CD8-positive, alpha-beta memory T cell (primary cell): ENCODE measurements at regions of chr14 and their contacts with region 1.

Region 1: DNA sequence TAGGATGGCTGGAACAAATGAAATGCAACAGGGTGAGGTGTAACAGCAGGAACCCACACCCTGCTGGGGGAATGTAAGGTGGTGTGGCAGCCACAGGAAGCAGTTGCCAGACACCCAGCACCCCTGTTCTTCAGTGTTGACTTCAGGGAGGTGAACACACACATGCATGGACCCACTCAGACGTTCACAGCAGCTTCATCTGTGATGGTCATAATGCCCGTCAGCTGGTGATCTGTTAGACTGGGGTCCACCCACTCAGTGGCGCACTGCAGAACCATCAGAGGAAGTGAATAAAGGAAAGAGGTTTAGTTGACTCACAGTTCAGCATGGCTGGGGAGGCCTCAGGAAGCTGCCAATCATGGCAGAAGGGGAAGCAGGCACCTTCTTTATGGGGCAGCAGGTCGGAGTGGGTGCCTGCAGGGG is 22.7 kb upstream of the TEX22 start:
- DNase-seq: peak in 1 of 5 donors; percentile 9
- H3K4me3 ChIP-seq: no peak overlapping the region
- H3K4me3 Mint-ChIP-seq: peak overlapping the region in 3 of 7 donors; percentile 15 to 77 (median 39)
- H3K27ac ChIP-seq: no peak overlapping the region
- H3K27ac Mint-ChIP-seq: peak overlapping the region in 2 of 8 donors; percentile 38 to 86
- H3K4me1 ChIP-seq: peaks cover 19% of the 10 kb centered on the region
- H3K4me1 Mint-ChIP-seq: peaks cover 11 to 13% (median 13%) of the 10 kb centered on the region in 3 donors
- H3K27me3 ChIP-seq: no peaks in the 10 kb centered on the region
- H3K27me3 Mint-ChIP-seq: no peaks in the 10 kb centered on the region

Region 2: DNA sequence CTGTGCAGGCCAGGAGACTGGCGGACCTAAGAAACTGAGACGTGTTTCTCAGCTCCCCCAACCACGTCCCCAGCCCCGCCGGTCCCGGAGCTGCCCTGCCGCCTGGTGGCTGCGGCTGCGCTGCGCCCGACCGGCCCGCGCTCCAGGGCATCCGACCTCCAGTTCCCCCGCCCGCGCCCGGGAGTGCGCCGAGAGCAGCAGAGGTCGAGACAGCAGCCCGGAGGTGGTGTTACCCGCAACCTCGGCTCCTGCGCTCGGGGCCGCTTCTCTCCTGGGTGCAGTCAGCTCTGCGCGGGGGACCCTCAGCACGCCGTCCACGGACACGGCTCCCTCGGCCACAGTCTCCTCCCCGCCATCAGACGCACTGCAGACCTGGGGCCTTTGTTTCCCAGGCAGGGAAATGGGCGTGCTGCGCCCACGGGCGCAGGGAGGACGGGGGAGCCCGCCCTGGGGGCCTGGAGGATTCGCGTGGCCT is 288.8 kb before region 1 on chr14:
- CTCF ChIA-PET with region 1: no interaction called
- POLR2A ChIA-PET with region 1: no interaction called
- DNase-seq: peak; percentile 74 to 88 (median 85)
- H3K4me3 ChIP-seq: peak overlapping the region; percentile 67
- H3K4me3 Mint-ChIP-seq: peak overlapping the region; percentile 77 to 91 (median 80)
- H3K27ac ChIP-seq: peak overlapping the region; percentile 47
- H3K27ac Mint-ChIP-seq: peak overlapping the region in 7 of 8 donors; percentile 50 to 95 (median 83)
- H3K4me1 ChIP-seq: peaks cover 19% of the 10 kb centered on the region
- H3K4me1 Mint-ChIP-seq: peaks cover 5 to 26% (median 11%) of the 10 kb centered on the region in 3 donors
- H3K27me3 ChIP-seq: no peaks in the 10 kb centered on the region
- H3K27me3 Mint-ChIP-seq: no peaks in the 10 kb centered on the region

Region 3: GRCh38 chr14:105398044-105398725 is 22.5 kb after region 1 on chr14 and contains the start of gene TEX22:
- CTCF ChIA-PET with region 1: interaction called, 18 read pairs
- POLR2A ChIA-PET with region 1: no interaction called
- DNase-seq: peak; percentile 82 to 89 (median 85)
- H3K4me3 ChIP-seq: peak within 1 kb of the TSS; percentile 70
- H3K4me3 Mint-ChIP-seq: peak within 1 kb of the TSS; percentile 77 to 94 (median 84)
- H3K27ac ChIP-seq: peak within 1 kb of the TSS; percentile 78
- H3K27ac Mint-ChIP-seq: peak within 1 kb of the TSS; percentile 32 to 93 (median 82)
- H3K4me1 ChIP-seq: peaks cover 18% of the 10 kb centered on the region
- H3K4me1 Mint-ChIP-seq: peaks cover 5 to 23% (median 10%) of the 10 kb centered on the region in 3 donors
- H3K27me3 ChIP-seq: no peaks in the 10 kb centered on the region
- H3K27me3 Mint-ChIP-seq: no peaks in the 10 kb centered on the region
- total RNA-seq, gene TEX22: 1.4 to 2.9 TPM

Region 4: DNA sequence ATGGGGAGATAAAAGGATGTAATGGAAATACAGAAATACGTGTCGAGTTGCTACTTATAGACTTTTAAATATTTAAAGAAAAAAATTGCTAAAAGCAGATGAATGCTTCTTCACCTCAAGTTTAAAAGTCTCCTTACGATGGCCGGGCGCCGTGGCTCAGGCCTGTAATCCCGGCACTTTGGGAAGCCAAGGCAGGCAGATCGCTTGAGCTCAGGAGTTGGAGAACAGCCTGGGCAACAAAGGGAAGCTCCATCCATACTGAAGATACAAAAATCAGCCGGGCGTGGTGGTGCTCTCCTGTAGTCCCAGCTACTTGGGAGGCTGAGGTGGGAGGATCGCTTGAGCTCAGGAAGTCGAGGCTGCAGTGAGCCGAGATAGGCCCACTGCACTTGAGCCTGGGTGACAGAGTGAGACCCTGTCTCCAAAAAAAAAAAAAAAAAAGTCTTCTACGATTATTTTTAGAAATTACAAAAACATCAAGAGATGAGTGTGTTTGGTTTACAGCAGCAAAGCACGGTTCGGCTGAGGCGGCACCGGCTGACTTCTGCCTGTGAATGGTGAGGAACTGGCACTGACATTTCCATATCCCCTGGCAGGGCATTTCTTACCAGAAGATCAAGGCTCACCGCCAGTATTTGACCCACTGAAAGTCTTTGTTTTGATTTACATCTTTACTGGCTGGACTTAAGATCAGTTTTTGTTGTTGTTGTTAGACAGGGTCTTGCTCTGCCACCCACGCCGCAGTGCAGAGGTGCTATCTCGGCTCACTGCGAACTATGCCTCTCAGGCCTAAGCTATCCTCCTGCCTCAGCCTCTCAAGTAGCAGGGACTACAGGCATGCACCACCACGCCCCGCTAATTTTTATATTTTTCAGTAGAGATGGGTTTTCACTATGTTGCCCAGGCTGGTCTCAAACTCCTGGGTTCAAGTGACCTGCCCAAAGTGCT is 40.1 kb after region 1 on chr14:
- CTCF ChIA-PET with region 1: no interaction called
- POLR2A ChIA-PET with region 1: no interaction called
- DNase-seq: no peak
- H3K4me3 ChIP-seq: no peak overlapping the region
- H3K4me3 Mint-ChIP-seq: peak overlapping the region; percentile 58 to 76 (median 70)
- H3K27ac ChIP-seq: no peak overlapping the region
- H3K27ac Mint-ChIP-seq: peak overlapping the region in 1 of 8 donors; percentile 38
- H3K4me1 ChIP-seq: peaks cover 24% of the 10 kb centered on the region
- H3K4me1 Mint-ChIP-seq: peaks cover 4 to 31% (median 11%) of the 10 kb centered on the region in 3 donors
- H3K27me3 ChIP-seq: peaks cover 7% of the 10 kb centered on the region
- H3K27me3 Mint-ChIP-seq: peaks cover 25 to 37% of the 10 kb centered on the region in 2 donors

Region 5: DNA sequence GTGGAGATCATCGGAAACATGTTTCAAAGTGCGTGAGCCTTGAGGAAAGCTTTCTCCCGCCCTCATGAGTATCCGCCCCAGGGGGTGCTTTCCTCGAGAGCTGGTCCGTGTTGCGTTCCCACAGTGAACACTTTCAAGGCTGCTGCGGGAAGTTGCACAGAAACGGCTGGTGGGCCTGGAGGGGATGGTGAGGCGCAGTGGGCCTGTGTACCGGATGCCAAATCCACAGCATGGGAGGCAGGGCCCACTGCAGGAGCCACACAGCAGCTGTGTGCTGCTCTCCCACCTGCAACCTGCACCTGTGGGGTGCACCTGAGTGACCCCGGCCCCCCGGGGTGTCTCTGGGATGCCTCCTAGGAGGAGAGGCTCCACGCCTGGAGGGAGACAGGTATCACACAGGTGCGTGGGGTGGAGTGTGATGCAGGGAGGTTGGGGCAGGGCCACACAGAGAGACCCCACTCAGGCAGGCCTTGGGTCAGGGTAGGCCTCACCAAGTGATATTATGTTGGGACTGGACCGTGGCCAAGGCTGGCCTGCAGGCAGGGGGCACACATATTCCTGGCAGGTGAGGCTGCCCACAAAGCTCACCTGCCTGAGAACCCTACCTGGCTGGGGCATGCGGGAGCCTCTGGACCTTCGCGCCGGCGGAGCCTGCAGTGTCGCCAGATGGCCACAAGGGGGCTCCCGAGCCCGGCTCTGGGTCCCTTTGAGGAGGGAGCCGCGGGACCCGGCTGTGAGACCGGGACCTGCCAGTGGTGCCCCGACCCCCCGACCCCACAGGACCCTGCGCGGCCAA is 161.9 kb after region 1 on chr14:
- CTCF ChIA-PET with region 1: interaction called, 10 read pairs
- POLR2A ChIA-PET with region 1: no interaction called
- DNase-seq: peak; percentile 56 to 77 (median 62)
- H3K4me3 ChIP-seq: no peak overlapping the region
- H3K4me3 Mint-ChIP-seq: no peak overlapping the region
- H3K27ac ChIP-seq: no peak overlapping the region
- H3K27ac Mint-ChIP-seq: peak overlapping the region in 1 of 8 donors; percentile 78
- H3K4me1 ChIP-seq: no peaks in the 10 kb centered on the region
- H3K4me1 Mint-ChIP-seq: peaks cover 0 to 4% (median 0%) of the 10 kb centered on the region in 3 donors
- H3K27me3 ChIP-seq: peaks cover 11% of the 10 kb centered on the region
- H3K27me3 Mint-ChIP-seq: peaks cover 12 to 24% of the 10 kb centered on the region in 2 donors